A673 (cell line): ENCODE measurements at regions of chr7 and their contacts with region 1.

Region 1: DNA sequence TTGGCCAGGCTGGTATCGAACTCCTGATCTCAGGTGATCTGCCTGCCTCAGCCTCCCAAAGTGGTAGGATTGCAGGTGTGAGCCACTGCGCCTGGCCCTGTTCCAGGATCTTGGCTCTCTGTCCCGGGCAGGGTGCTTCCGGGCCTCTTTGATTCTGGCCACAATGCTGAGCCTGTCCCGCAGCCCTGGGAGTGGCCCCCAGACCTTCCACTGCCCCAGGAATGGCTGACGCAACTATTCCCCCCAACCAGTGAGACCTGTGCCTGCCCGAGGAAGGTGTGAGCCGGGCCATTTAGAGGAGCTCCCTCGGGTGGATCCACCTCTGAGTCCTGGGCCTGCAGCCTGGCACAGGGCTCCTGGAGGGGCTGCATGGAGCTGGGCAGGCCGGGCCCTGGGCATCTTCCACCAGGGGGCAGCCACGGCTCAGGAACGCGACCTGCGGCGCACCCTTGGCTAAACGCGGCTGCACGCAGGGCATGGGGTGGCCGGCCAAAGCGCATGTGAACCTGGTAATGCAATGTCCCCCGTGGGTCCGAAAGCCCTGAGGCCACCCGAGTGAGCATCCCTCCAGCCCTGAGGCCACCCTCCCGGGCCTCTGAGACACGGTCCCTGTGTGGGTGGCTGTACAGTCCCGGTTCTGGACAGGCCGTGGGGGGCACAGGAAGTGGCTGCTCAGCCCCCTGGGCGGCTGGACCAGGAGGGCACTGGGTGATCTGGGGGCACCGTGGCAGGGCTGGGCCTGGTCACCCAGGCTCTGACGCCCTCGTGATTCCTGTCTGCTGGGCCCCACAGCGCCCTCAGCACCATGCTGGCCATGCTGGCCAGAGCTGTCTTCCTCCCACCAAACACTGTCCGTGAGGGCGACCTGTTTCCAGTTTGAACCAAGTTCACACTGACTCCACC is 24.8 kb downstream of the GRIFIN start:
- DNase-seq: peak; percentile 76
- H3K4me3 ChIP-seq: peak overlapping the region; percentile 18
- H3K27ac ChIP-seq: no peak overlapping the region
- H3K4me1 ChIP-seq: peaks cover 6% of the 10 kb centered on the region
- H3K27me3 ChIP-seq: no peaks in the 10 kb centered on the region
- CTCF ChIP-seq: peak; percentile 94

Region 2: DNA sequence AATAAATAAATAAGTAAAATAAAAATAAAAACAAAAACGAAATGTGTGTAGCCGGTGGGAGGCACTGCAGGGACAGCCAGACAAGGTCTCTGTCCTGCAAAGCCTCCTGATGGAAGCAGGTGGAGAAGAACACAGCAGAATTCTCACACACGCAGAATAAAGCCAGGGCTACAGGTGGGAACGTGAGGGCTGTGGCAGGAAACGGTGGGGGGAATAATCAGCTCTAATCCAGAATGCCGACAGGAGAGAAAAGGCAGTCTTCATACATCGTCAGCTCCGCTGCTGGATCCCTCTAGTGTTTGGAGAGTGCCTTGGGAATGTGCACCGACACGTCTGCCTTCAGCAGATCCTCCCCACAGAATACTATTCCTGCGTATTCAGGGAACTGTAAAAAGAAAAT is 130.4 kb before region 1 on chr7:
- CTCF ChIA-PET with region 1: no interaction called
- POLR2A ChIA-PET with region 1: no interaction called
- intact Hi-C with region 1: no loop called
- DNase-seq: no peak
- H3K4me3 ChIP-seq: no peak overlapping the region
- H3K27ac ChIP-seq: no peak overlapping the region
- H3K4me1 ChIP-seq: no peaks in the 10 kb centered on the region
- H3K27me3 ChIP-seq: no peaks in the 10 kb centered on the region
- CTCF ChIP-seq: no peak

Region 3: GRCh38 chr7:2470204-2471021 is 19.0 kb after region 1 on chr7:
- CTCF ChIA-PET with region 1: interaction called, 10 read pairs
- POLR2A ChIA-PET with region 1: no interaction called
- intact Hi-C with region 1: no loop called
- DNase-seq: no peak
- H3K4me3 ChIP-seq: no peak overlapping the region
- H3K27ac ChIP-seq: peak overlapping the region; percentile 82
- H3K4me1 ChIP-seq: peaks cover 17% of the 10 kb centered on the region
- H3K27me3 ChIP-seq: no peaks in the 10 kb centered on the region
- CTCF ChIP-seq: no peak

Region 4: GRCh38 chr7:2680792-2681490 is 229.5 kb after region 1 on chr7:
- CTCF ChIA-PET with region 1: interaction called, 15 read pairs
- POLR2A ChIA-PET with region 1: no interaction called
- intact Hi-C with region 1: loop called (anchors 1 kb)
- DNase-seq: peak; percentile 72
- H3K4me3 ChIP-seq: no peak overlapping the region
- H3K27ac ChIP-seq: no peak overlapping the region
- H3K4me1 ChIP-seq: no peaks in the 10 kb centered on the region
- H3K27me3 ChIP-seq: peaks cover 3% of the 10 kb centered on the region
- CTCF ChIP-seq: peak; percentile 75

Region 5: DNA sequence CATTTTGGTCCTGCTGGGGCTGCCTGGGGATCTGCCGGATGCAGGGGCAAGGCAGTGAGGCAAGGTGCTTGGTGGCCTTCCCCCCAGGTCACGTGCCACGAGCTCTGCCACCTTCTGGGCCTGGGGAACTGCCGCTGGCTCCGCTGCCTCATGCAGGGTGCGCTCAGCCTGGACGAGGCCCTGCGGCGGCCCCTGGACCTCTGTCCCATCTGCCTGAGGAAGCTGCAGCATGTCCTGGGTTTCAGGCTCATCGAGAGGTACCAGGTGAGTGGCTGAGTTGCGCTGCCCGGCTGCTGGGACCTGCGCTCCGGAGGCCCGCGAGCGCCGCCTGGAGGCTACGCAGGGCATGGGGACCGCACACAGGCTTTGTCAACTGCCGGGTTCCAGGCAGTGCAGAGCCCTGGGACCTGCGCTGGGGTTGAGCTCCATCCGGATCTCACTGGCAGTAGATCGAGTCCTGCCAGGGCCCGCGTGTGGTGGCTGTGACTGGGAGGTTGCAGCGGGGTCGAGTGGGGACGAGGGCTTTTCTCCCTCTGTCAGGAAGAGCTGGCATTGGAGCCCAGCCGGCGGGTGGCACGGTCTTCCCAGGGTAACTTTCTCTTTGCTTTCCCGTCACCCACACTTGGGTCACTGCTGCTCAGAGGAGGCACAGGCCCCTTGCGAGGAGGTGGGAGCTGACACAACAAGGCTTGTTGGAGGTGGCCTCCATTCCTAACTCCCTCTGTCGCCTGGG is 258.3 kb after region 1 on chr7:
- CTCF ChIA-PET with region 1: interaction called, 3 read pairs
- POLR2A ChIA-PET with region 1: no interaction called
- intact Hi-C with region 1: loop called (anchors 10 kb)
- DNase-seq: peak; percentile 67
- H3K4me3 ChIP-seq: peak overlapping the region; percentile 29
- H3K27ac ChIP-seq: no peak overlapping the region
- H3K4me1 ChIP-seq: no peaks in the 10 kb centered on the region
- H3K27me3 ChIP-seq: no peaks in the 10 kb centered on the region
- CTCF ChIP-seq: peak; percentile 97